ENCODE measurements at regions of chr18 and their contacts with region 1.

Region 1: GRCh38 chr18:7164323-7165004 is 46.9 kb upstream of the LAMA1 start:
- DNase-seq: no peak
- ATAC-seq: peak in 1 of 8 donors; percentile 50
- H3K4me3 ChIP-seq: no peak overlapping the region
- H3K27ac ChIP-seq: no peak overlapping the region
- H3K4me1 ChIP-seq: no peaks in the 10 kb centered on the region
- H3K27me3 ChIP-seq: peaks cover 0 to 24% (median 7%) of the 10 kb centered on the region in 7 donors
- CTCF ChIP-seq: peak in 7 of 9 donors; percentile 34 to 59 (median 42)

Region 2: DNA sequence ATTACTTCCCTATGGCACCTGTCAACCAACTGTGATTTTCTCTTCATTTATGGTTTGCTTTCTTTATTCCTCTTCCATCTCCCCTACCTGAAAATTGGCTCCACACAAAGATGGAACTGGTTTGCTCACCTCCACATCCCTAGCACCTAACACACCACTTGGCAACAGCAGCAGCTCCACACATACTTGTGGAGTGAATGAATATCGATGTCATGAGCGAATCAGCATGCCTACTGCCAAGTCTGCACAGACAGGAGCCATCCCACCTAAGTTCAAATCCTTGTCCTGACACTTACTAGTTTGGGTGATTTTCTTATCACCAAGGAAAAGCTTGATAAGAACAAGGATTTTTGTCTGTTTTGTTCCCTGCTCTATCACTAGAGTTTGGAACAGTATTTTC is 1077.7 kb before region 1 on chr18:
- intact Hi-C with region 1: no loop called
- DNase-seq: no peak
- ATAC-seq: no peak
- H3K4me3 ChIP-seq: no peak overlapping the region
- H3K27ac ChIP-seq: no peak overlapping the region
- H3K4me1 ChIP-seq: peaks cover 0 to 11% (median 0%) of the 10 kb centered on the region in 9 donors
- H3K27me3 ChIP-seq: no peaks in the 10 kb centered on the region
- CTCF ChIP-seq: no peak

Region 3: GRCh38 chr18:6729247-6730091 is 435.0 kb before region 1 on chr18 and contains the start of gene ARHGAP28:
- intact Hi-C with region 1: no loop called
- DNase-seq: peak; percentile 79 to 83
- ATAC-seq: peak; percentile 93 to 98 (median 96)
- H3K4me3 ChIP-seq: peak within 1 kb of the TSS; percentile 40 to 78 (median 68)
- H3K27ac ChIP-seq: peak within 1 kb of the TSS; percentile 63 to 91 (median 82)
- H3K4me1 ChIP-seq: peaks cover 0 to 26% (median 8%) of the 10 kb centered on the region in 9 donors
- H3K27me3 ChIP-seq: peaks cover 0 to 7% (median 0%) of the 10 kb centered on the region in 7 donors
- CTCF ChIP-seq: peak in 8 of 9 donors; percentile 17 to 64 (median 36)
- total RNA-seq, gene ARHGAP28: 0.82 to 5.3 (median 2.6) TPM

Region 4: GRCh38 chr18:7021994-7022840 is 142.2 kb before region 1 on chr18:
- intact Hi-C with region 1: loop called in 1 of 10 experiments (anchors 10 kb)
- DNase-seq: no peak
- ATAC-seq: no peak
- H3K4me3 ChIP-seq: no peak overlapping the region
- H3K27ac ChIP-seq: no peak overlapping the region
- H3K4me1 ChIP-seq: no peaks in the 10 kb centered on the region
- H3K27me3 ChIP-seq: no peaks in the 10 kb centered on the region
- CTCF ChIP-seq: peak in 3 of 9 donors; percentile 13 to 22 (median 14)

Region 5: GRCh38 chr18:7116001-7116730 is 48.3 kb before region 1 on chr18:
- intact Hi-C with region 1: no loop called
- DNase-seq: no peak
- ATAC-seq: no peak
- H3K4me3 ChIP-seq: peak overlapping the region in 9 of 10 donors; percentile 37 to 59 (median 49)
- H3K27ac ChIP-seq: no peak overlapping the region
- H3K4me1 ChIP-seq: peaks cover 0 to 23% (median 16%) of the 10 kb centered on the region in 9 donors
- H3K27me3 ChIP-seq: peaks cover 0 to 84% (median 78%) of the 10 kb centered on the region in 7 donors
- CTCF ChIP-seq: no peak

Region 6: GRCh38 chr18:7373441-7373840 is 209.0 kb after region 1 on chr18:
- intact Hi-C with region 1: no loop called
- DNase-seq: no peak
- ATAC-seq: no peak
- H3K4me3 ChIP-seq: no peak overlapping the region
- H3K27ac ChIP-seq: peak overlapping the region in 3 of 10 donors; percentile 92 to 94 (median 92)
- H3K4me1 ChIP-seq: peaks cover 16 to 55% (median 32%) of the 10 kb centered on the region in 9 donors
- H3K27me3 ChIP-seq: no peaks in the 10 kb centered on the region
- CTCF ChIP-seq: no peak

Measured in heart right ventricle (tissue), 16 donors.